H1 (cell line): ENCODE measurements at regions of chr3 and their contacts with region 1.

Region 1: GRCh38 chr3:16723978-16724377 is 118.8 kb upstream of the DAZL start:
- DNase-seq: no peak
- H3K4me3 ChIP-seq: no peak overlapping the region
- H3K27ac ChIP-seq: no peak overlapping the region
- H3K4me1 ChIP-seq: peaks cover 0 to 8% (median under 1%) of the 10 kb centered on the region in 4 experiments; a peak in 2 of 7 replicates
- H3K27me3 ChIP-seq: no peaks in the 10 kb centered on the region
- CTCF ChIP-seq: peak in 2 of 3 experiments; percentile 41 to 79; a peak in 2 of 4 replicates
- EP300 ChIP-seq: no peak
- POLR2A ChIP-seq: no peak
- RAD21 ChIP-seq: peak; percentile 32 to 52; a peak in 3 of 4 replicates

Region 2: GRCh38 chr3:16741103-16741758 is 17.3 kb after region 1 on chr3:
- CTCF ChIA-PET with region 1: no interaction called
- POLR2A ChIA-PET with region 1: no interaction called
- DNase-seq: no peak
- H3K4me3 ChIP-seq: no peak overlapping the region
- H3K27ac ChIP-seq: no peak overlapping the region
- H3K4me1 ChIP-seq: no peaks in the 10 kb centered on the region
- H3K27me3 ChIP-seq: no peaks in the 10 kb centered on the region
- CTCF ChIP-seq: no peak
- EP300 ChIP-seq: no peak
- POLR2A ChIP-seq: no peak
- RAD21 ChIP-seq: no peak

Region 3: GRCh38 chr3:16767004-16767403 is 43.0 kb after region 1 on chr3:
- CTCF ChIA-PET with region 1: interaction called, 10 read pairs
- POLR2A ChIA-PET with region 1: interaction called, 3 read pairs
- DNase-seq: no peak
- H3K4me3 ChIP-seq: no peak overlapping the region
- H3K27ac ChIP-seq: no peak overlapping the region
- H3K4me1 ChIP-seq: peaks cover 2 to 16% (median 9%) of the 10 kb centered on the region in 4 experiments; a peak in 6 of 7 replicates
- H3K27me3 ChIP-seq: no peaks in the 10 kb centered on the region
- CTCF ChIP-seq: peak in 2 of 3 experiments; percentile 21 to 41; a peak in 2 of 4 replicates
- EP300 ChIP-seq: no peak
- POLR2A ChIP-seq: no peak
- RAD21 ChIP-seq: peak; percentile 45 to 56